Prostate gland (tissue), 2 donors: ENCODE measurements at regions of chr11 and their contacts with region 1.

Region 1: DNA sequence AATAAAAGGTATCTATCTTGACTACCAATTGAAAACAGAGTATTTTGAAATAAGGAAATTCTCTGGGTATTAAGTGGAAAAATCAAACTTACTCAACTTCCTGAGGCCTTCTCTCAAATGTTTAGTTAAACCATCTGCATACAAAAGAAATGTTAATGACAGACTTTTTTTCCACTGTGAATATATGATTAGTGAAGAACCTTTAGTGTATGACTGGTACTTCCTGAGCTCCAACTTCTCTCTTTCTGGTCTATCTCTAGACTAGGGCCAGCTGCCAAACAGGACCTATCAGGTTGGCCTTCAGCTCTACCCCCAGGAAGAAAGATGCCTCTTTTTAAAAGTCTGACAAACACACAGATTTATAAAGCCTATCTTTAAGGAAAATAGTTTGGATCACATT is 68.8 kb upstream of the SCUBE2 start:
- DNase-seq: no peak
- H3K4me3 ChIP-seq: no peak overlapping the region
- H3K27ac ChIP-seq: no peak overlapping the region
- H3K4me1 ChIP-seq: no peaks in the 10 kb centered on the region
- H3K27me3 ChIP-seq: no peaks in the 10 kb centered on the region
- CTCF ChIP-seq: no peak
- POLR2A ChIP-seq: no peak

Region 2: DNA sequence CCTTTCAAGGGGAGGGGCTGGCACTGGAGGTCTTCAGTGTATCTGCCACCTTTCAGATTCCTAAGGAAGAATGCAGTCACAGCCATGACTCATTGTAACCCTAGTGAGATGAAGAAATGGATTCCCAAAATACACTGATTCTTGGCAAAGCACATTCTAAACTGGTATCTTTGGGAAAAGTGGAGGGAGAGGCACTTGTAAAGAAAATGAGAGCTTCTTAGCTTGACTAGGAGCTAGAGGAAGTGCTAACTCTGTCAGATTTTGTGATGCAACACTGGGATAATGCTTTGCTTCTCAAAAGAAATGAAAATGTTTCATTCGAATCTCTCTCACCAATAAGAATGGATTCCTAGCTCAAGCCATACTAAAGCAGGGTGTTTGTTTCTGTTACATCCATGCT is 170.7 kb before region 1 on chr11:
- intact Hi-C with region 1: no loop called
- DNase-seq: no peak
- H3K4me3 ChIP-seq: no peak overlapping the region
- H3K27ac ChIP-seq: no peak overlapping the region
- H3K4me1 ChIP-seq: no peaks in the 10 kb centered on the region
- H3K27me3 ChIP-seq: no peaks in the 10 kb centered on the region
- CTCF ChIP-seq: no peak
- POLR2A ChIP-seq: no peak

Region 3: GRCh38 chr11:9506489-9507276 is 346.5 kb after region 1 on chr11:
- intact Hi-C with region 1: loop called (anchors 10 kb)
- DNase-seq: peak; percentile 70
- H3K4me3 ChIP-seq: no peak overlapping the region
- H3K27ac ChIP-seq: no peak overlapping the region
- H3K4me1 ChIP-seq: no peaks in the 10 kb centered on the region
- H3K27me3 ChIP-seq: no peaks in the 10 kb centered on the region
- CTCF ChIP-seq: peak; percentile 77 to 91 (median 88)
- POLR2A ChIP-seq: no peak